ENCODE measurements at regions of chr17 and their contacts with region 1.

Region 1: GRCh38 chr17:82030470-82031302 is 792 bp upstream of the RAC3 start:
- DNase-seq: peak; percentile 66 to 90 (median 81)
- ATAC-seq: peak; percentile 92
- H3K4me3 ChIP-seq: peak overlapping the region; percentile 49 to 59
- H3K4me3 Mint-ChIP-seq: peak overlapping the region; percentile 82
- H3K27ac ChIP-seq: no peak overlapping the region
- H3K27ac Mint-ChIP-seq: no peak overlapping the region
- H3K4me1 ChIP-seq: peaks cover 19% of the 10 kb centered on the region
- H3K4me1 Mint-ChIP-seq: peaks cover 14% of the 10 kb centered on the region
- H3K27me3 ChIP-seq: no peaks in the 10 kb centered on the region
- H3K27me3 Mint-ChIP-seq: no peaks in the 10 kb centered on the region
- CTCF ChIP-seq: peak; percentile 87

Region 2: GRCh38 chr17:82105882-82106687 is 75.4 kb after region 1 on chr17:
- CTCF ChIA-PET with region 1: interaction called, 10 read pairs
- POLR2A ChIA-PET with region 1: interaction called, 4 read pairs
- intact Hi-C with region 1: no loop called
- DNase-seq: peak in 8 of 9 experiments; percentile 38 to 80 (median 60)
- ATAC-seq: peak; percentile 65
- H3K4me3 ChIP-seq: peak overlapping the region; percentile 59 to 64
- H3K4me3 Mint-ChIP-seq: peak overlapping the region; percentile 87
- H3K27ac ChIP-seq: peak overlapping the region; percentile 65 to 89
- H3K27ac Mint-ChIP-seq: peak overlapping the region; percentile 96
- H3K4me1 ChIP-seq: peaks cover 22% of the 10 kb centered on the region
- H3K4me1 Mint-ChIP-seq: peaks cover 23% of the 10 kb centered on the region
- H3K27me3 ChIP-seq: no peaks in the 10 kb centered on the region
- H3K27me3 Mint-ChIP-seq: no peaks in the 10 kb centered on the region
- CTCF ChIP-seq: peak; percentile 28

Region 3: DNA sequence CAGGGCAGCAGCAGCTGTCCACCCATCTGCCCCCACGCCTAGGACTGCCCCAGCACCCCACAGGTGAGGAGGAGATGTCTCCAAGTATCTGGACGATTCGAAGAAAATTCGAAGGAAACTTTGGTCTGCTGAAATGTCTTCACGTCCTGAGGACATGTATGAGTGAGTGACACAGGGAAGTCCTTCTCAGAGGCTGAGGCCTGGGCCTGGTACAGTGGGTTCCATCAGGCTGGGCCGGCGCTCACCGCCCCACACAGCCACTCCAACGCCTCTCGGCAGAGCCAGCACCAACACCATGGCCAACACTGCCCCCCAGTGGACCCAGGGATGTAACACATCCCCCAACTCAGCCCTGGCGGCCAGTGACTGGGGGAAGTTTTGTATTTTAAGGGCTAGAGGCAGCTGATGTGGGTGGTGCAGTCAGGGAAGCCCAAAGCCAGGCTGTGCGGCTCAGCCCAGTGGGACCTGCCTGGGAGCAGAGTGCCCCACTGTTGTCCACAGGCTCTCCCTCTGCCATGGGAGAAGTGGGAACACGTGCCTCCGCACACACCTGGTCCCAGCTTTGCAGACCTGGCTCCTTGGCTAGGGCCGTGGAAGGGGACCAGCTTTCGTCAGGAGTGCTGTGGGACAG is 123.2 kb after region 1 on chr17:
- CTCF ChIA-PET with region 1: interaction called, 105 read pairs
- POLR2A ChIA-PET with region 1: interaction called, 3 read pairs
- intact Hi-C with region 1: loop called (anchors 1 kb)
- DNase-seq: peak; percentile 71 to 92 (median 84)
- ATAC-seq: peak; percentile 100
- H3K4me3 ChIP-seq: no peak overlapping the region
- H3K4me3 Mint-ChIP-seq: no peak overlapping the region
- H3K27ac ChIP-seq: no peak overlapping the region
- H3K27ac Mint-ChIP-seq: peak overlapping the region; percentile 57
- H3K4me1 ChIP-seq: peaks cover 7% of the 10 kb centered on the region
- H3K4me1 Mint-ChIP-seq: peaks cover 5% of the 10 kb centered on the region
- H3K27me3 ChIP-seq: no peaks in the 10 kb centered on the region
- H3K27me3 Mint-ChIP-seq: no peaks in the 10 kb centered on the region
- CTCF ChIP-seq: peak; percentile 98

Region 4: GRCh38 chr17:82236142-82236981 is 205.7 kb after region 1 on chr17:
- CTCF ChIA-PET with region 1: interaction called, 6 read pairs
- POLR2A ChIA-PET with region 1: no interaction called
- intact Hi-C with region 1: loop called in 1 of 2 experiments (anchors 2 kb)
- DNase-seq: peak in 8 of 9 experiments; percentile 56 to 82 (median 72)
- ATAC-seq: peak; percentile 52
- H3K4me3 ChIP-seq: no peak overlapping the region
- H3K4me3 Mint-ChIP-seq: no peak overlapping the region
- H3K27ac ChIP-seq: peak overlapping the region in 1 of 2 experiments; percentile 6
- H3K27ac Mint-ChIP-seq: peak overlapping the region; percentile 55
- H3K4me1 ChIP-seq: peaks cover 54% of the 10 kb centered on the region
- H3K4me1 Mint-ChIP-seq: peaks cover 40% of the 10 kb centered on the region
- H3K27me3 ChIP-seq: no peaks in the 10 kb centered on the region
- H3K27me3 Mint-ChIP-seq: no peaks in the 10 kb centered on the region
- CTCF ChIP-seq: peak; percentile 82

Region 5: GRCh38 chr17:82551779-82552457 is 521.2 kb after region 1 on chr17:
- CTCF ChIA-PET with region 1: no interaction called
- POLR2A ChIA-PET with region 1: no interaction called
- intact Hi-C with region 1: loop called in 1 of 2 experiments (anchors 1 kb)
- DNase-seq: peak; percentile 49 to 85 (median 77)
- ATAC-seq: peak; percentile 98
- H3K4me3 ChIP-seq: no peak overlapping the region
- H3K4me3 Mint-ChIP-seq: no peak overlapping the region
- H3K27ac ChIP-seq: no peak overlapping the region
- H3K27ac Mint-ChIP-seq: no peak overlapping the region
- H3K4me1 ChIP-seq: peaks cover 26% of the 10 kb centered on the region
- H3K4me1 Mint-ChIP-seq: peaks cover 53% of the 10 kb centered on the region
- H3K27me3 ChIP-seq: no peaks in the 10 kb centered on the region
- H3K27me3 Mint-ChIP-seq: no peaks in the 10 kb centered on the region
- CTCF ChIP-seq: peak; percentile 77